ENCODE measurements at regions of chr2 and their contacts with region 1.

Region 1: DNA sequence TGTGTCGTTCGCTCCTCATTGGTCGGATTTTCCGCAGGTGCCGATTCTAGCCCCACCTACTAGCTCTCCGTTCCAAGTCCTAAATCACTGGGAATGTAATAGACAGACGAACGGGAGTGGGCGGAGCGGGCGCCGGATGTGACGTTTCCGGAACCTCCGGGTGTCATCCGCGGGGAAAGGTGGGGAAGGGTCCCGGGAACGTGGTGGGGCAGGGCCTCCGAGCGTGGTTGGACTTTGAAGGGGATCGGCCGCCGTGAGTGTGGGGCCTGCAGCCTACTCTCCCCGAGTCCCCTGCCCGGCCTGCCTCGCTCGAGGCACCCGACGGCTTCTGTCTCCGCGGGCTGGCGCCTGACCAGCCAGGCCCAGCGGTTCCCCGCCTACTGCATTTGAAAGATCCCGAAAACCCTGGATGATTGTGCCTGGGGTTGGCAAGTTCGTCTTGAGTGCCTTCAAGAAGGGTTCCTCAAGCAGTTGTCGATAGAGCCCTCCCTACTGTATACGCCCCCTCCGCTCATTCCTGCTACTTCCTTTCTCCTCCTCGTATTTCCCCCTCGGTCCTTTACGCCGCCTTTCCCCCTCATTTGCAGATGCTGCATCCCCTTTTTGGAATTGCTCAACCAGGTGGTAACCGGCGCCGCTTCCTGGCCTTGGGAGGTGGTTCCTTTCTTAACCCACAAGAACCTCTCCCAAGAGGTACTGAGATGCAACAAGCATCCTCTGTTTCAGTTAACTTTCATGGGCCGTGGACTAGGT is at the start of gene STAMBP:
- DNase-seq: peak; percentile 96 to 97
- ATAC-seq: peak; percentile 96 to 97
- H3K4me3 ChIP-seq: peak within 1 kb of the TSS; percentile 81
- H3K27ac ChIP-seq: peak within 1 kb of the TSS; percentile 88 to 95
- H3K4me1 ChIP-seq: peaks cover 23% of the 10 kb centered on the region; the same call in 2 of the 3 replicates
- CTCF ChIP-seq: no peak
- EP300 ChIP-seq: no peak
- POLR2A ChIP-seq: peak; percentile 83
- RAD21 ChIP-seq: no peak
- polyA plus RNA-seq, gene STAMBP: 86.1 and 96.3 TPM in 2 replicates

Region 2: GRCh38 chr2:73651586-73652230 is 177.3 kb before region 1 on chr2:
- CTCF ChIA-PET with region 1: no interaction called
- POLR2A ChIA-PET with region 1: no interaction called
- DNase-seq: no peak
- ATAC-seq: peak; percentile 37 to 55; a peak in 3 of 6 replicates
- H3K4me3 ChIP-seq: no peak overlapping the region
- H3K27ac ChIP-seq: no peak overlapping the region
- H3K4me1 ChIP-seq: no peaks in the 10 kb centered on the region
- CTCF ChIP-seq: no peak
- EP300 ChIP-seq: no peak
- POLR2A ChIP-seq: no peak
- RAD21 ChIP-seq: no peak

Region 3: GRCh38 chr2:73746015-73746876 is 82.7 kb before region 1 on chr2:
- CTCF ChIA-PET with region 1: no interaction called
- POLR2A ChIA-PET with region 1: no interaction called
- DNase-seq: no peak
- ATAC-seq: peak in 1 of 2 experiments; percentile 40; a peak in 2 of 6 replicates
- H3K4me3 ChIP-seq: no peak overlapping the region
- H3K27ac ChIP-seq: no peak overlapping the region
- H3K4me1 ChIP-seq: no peaks in the 10 kb centered on the region
- CTCF ChIP-seq: no peak
- EP300 ChIP-seq: no peak
- POLR2A ChIP-seq: no peak
- RAD21 ChIP-seq: no peak

Region 4: DNA sequence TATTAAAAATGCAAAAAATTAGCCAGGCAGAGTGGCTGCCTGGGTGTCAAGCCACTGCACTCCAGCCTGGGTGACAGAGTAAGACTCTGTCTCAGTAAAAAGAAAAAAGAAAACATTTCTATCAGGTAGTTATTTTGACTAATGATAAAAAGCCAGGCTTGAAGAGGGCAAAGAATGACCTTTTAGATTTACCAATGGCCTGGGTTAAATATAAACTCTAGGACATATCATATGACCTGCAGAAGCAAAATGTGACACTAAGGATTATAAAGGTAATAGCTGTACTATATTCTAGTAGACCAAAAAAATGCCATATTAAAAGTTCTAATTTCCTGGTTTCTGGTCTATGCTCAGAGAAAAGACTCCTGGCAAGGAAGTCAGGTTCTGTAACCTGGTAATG is 16.4 kb before region 1 on chr2:
- CTCF ChIA-PET with region 1: interaction called, 21 read pairs
- POLR2A ChIA-PET with region 1: interaction called, 3 read pairs
- DNase-seq: no peak
- ATAC-seq: no peak
- H3K4me3 ChIP-seq: no peak overlapping the region
- H3K27ac ChIP-seq: no peak overlapping the region
- H3K4me1 ChIP-seq: no peaks in the 10 kb centered on the region
- CTCF ChIP-seq: no peak
- EP300 ChIP-seq: no peak
- POLR2A ChIP-seq: no peak
- RAD21 ChIP-seq: no peak

Region 5: DNA sequence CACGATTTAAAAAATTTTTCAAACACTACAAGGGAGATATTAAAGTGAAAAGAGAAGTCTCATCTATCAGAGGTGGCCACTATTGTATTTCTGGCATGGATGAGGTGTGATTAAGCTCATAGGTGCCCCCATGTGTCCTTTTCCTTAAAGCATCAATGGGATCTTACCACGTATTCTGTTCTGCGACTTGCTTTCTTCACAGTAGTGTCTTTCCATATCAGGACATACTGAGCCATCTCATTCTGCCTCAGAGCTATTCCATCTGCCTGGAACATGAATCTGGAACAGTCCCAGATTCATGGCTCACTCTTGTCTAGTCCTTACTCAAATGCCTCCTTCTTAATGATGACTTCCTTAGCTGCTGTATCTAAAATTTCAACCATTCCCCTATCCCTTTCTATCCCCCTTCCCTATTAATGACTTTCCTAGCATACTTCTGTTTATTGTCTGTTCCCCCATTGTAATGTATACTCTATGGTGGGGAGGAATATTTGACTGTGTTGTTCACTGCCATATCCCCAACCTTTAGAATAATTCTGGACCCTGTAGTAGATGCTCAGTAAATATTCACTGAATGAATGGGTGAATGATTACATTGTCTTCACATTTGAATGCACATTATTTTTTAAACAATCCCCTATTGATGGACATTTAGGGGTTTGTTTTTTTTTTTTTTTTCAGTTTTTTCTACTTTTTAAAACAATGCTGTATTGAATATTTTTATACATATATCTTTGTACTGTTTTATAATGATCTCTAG is 10.8 kb after region 1 on chr2:
- CTCF ChIA-PET with region 1: interaction called, 38 read pairs
- POLR2A ChIA-PET with region 1: interaction called, 10 read pairs
- DNase-seq: no peak
- ATAC-seq: no peak
- H3K4me3 ChIP-seq: no peak overlapping the region
- H3K27ac ChIP-seq: no peak overlapping the region
- H3K4me1 ChIP-seq: peaks cover 15% of the 10 kb centered on the region
- CTCF ChIP-seq: no peak
- EP300 ChIP-seq: no peak
- POLR2A ChIP-seq: no peak
- RAD21 ChIP-seq: peak in 1 of 2 experiments; percentile 16; a peak in 1 of 5 replicates

Region 6: GRCh38 chr2:73855526-73855925 is 26.5 kb after region 1 on chr2:
- CTCF ChIA-PET with region 1: interaction called, 10 read pairs
- POLR2A ChIA-PET with region 1: no interaction called
- DNase-seq: no peak
- ATAC-seq: no peak
- H3K4me3 ChIP-seq: no peak overlapping the region
- H3K27ac ChIP-seq: no peak overlapping the region
- H3K4me1 ChIP-seq: peaks cover 38% of the 10 kb centered on the region
- CTCF ChIP-seq: no peak
- EP300 ChIP-seq: no peak
- POLR2A ChIP-seq: no peak
- RAD21 ChIP-seq: no peak

Region 7: DNA sequence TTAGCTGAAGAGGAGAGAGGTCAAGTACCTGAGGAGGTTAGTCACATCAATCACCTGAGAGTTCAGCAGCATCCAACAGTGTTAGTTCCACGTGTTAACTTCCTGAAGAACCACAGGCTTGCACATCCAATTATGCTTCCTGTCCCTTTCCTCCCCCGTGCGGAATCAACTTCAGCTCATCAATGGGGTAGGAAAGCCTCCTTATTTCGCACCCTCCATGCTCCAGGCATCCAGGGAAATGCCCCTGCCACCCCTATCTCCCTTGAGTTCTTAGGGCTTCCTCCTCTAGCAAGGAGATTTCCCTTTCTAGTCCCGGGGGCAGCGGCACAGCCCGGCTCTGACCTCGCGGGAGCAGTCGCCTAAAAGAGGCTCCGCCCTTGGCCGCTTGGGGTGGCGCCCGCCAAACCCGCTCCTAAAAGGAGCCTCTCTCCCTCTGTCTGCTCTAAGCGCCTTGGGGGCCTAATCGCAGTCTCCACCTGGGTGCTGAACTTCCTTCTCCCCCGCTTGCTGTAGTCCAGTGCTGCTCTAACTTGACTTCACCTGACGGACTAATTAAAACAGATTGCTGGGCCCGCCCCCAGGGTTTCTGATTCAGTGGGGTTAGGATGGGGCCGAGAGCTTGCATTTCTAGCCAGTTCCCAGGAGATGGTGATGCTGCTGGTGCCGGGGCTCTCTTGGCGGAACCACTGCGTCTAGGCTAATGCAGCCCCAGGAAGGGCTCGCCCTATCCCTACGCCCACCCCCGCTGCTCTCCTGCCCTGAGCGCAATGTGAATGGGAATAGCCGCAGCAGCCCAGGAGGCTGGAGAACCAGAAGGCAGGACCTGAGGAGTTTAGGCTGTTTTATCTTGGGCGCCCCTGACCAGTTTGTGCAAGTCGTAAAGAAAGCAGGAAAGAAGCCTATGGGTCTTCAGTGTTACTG is 152.3 kb after region 1 on chr2:
- CTCF ChIA-PET with region 1: no interaction called
- POLR2A ChIA-PET with region 1: no interaction called
- DNase-seq: peak; percentile 58 to 81
- ATAC-seq: peak; percentile 70 to 87
- H3K4me3 ChIP-seq: peak overlapping the region; percentile 50
- H3K27ac ChIP-seq: peak overlapping the region; percentile 72 to 85
- H3K4me1 ChIP-seq: peaks cover 50% of the 10 kb centered on the region
- CTCF ChIP-seq: no peak
- EP300 ChIP-seq: no peak
- POLR2A ChIP-seq: peak; percentile 70
- RAD21 ChIP-seq: no peak

Region 8: DNA sequence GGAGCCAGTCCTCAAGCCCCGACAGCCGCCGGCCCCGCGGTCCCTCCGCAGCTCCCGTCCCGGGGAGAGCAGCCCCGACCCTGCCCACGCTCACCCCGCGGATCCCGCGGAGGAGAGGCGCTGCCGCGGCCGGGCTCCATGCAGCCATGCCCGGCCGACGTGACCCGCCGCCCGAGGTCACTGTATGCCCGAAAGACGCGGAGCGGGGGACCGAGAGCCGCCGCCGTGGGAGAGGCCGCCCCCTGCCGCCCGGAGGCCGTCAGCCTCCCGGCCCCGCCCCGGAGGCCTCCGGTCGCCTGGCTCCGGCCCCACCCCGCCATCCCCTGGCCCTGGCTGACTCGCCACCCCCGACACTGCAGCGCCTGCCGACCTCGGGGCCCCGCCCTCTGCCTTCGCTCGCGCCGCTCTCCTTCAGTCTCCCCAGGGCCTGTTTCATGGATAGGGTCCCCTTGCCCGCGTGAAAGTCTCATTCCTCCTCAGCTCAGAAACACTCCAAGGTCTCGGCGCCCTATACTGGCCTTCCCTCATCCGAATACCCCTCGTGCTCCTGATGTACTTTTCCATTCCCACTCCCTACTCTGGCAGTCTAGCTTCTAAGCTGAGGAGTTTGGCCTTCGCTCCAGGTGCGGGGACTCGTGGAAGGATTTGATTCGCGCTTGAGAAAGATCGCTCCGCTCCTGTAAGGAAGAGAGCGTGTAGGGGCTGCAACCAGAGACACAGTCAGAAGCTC is 318.9 kb after region 1 on chr2 and contains the start of gene BOLA3:
- CTCF ChIA-PET with region 1: interaction called, 85 read pairs
- POLR2A ChIA-PET with region 1: interaction called, 12 read pairs
- DNase-seq: peak; percentile 82 to 95
- ATAC-seq: peak; percentile 94 to 96
- H3K4me3 ChIP-seq: peak within 1 kb of the TSS; percentile 82
- H3K27ac ChIP-seq: peak within 1 kb of the TSS; percentile 88 to 94
- H3K4me1 ChIP-seq: peaks cover 15% of the 10 kb centered on the region
- CTCF ChIP-seq: peak; percentile 89
- EP300 ChIP-seq: no peak
- POLR2A ChIP-seq: peak; percentile 96
- RAD21 ChIP-seq: peak; percentile 34 to 64; a peak in 4 of 5 replicates
- polyA plus RNA-seq, gene BOLA3: 93.9 and 136 TPM in 2 replicates

Region 9: DNA sequence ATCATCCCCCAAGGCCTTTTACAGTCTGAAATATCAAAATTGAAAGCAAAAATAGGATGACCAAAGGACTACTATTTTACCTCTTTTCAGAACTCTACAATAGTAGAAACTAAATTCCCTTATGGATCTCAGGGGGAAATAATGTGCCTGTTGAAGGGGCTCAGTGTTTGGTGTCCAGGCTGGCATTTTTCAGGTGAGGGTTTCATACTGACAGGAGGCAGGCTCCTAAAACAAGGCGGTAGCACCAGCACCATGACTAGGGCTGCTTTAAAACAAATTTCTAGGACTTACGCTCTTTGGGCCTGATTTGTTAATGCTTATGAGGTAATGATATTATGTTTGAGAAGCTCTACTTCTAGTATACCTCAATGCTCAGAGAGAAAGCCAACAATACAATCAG is 324.0 kb after region 1 on chr2:
- CTCF ChIA-PET with region 1: interaction called, 85 read pairs
- POLR2A ChIA-PET with region 1: interaction called, 12 read pairs
- DNase-seq: no peak
- ATAC-seq: no peak
- H3K4me3 ChIP-seq: no peak overlapping the region
- H3K27ac ChIP-seq: no peak overlapping the region
- H3K4me1 ChIP-seq: peaks cover 6% of the 10 kb centered on the region; the same call in 2 of the 3 replicates
- CTCF ChIP-seq: no peak
- EP300 ChIP-seq: no peak
- POLR2A ChIP-seq: no peak
- RAD21 ChIP-seq: no peak

Region 10: DNA sequence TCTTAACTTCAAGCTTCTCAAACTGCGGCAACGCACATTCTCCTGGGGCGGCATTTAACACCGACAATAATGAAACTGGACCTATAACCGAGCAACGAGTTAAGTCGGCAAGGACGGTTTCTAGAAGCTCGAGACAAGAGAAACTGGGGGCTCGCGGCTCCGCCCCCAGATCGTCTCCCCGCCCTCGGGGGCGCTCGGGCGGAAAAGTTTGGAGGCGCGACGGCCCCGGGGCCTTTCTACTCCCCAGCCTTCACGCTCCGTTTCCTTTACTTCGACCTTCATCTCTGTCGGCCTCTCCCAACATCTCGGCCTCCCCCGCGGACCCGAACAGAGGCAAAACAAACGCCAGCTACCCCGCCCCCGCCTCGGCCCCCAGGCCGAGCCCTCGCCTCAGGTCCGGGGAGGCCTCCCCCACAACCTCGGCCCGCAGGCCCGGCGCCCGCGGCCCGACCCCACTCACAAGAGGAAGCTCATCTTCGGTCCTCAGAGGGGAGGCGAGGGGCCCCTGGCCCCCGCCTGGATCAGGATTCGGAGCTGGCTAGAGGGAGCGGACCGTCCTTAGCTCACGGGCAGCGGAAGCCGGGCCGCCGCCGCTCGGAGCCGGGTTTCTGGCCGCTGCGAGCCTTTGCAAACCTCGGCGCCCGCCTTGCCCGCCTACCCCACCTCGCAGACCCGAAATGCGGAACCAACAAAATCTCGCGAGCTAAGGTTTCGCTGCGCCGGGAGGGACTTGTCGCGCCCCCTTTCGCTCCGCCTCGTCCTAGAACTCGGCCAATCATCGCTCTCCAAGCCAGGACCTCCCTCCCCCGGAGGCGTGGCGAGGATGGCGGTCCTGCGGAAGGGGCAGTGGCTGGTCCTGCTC is 349.4 kb after region 1 on chr2 and contains the start of gene MOB1A:
- CTCF ChIA-PET with region 1: interaction called, 6 read pairs
- POLR2A ChIA-PET with region 1: interaction called, 20 read pairs
- DNase-seq: peak; percentile 96 to 99
- ATAC-seq: peak; percentile 98 to 99
- H3K4me3 ChIP-seq: peak within 1 kb of the TSS; percentile 85
- H3K27ac ChIP-seq: peak within 1 kb of the TSS; percentile 92 to 95
- H3K4me1 ChIP-seq: peaks cover 12% of the 10 kb centered on the region; the same call in 2 of the 3 replicates
- CTCF ChIP-seq: no peak
- EP300 ChIP-seq: no peak
- POLR2A ChIP-seq: peak; percentile 86
- RAD21 ChIP-seq: no peak
- polyA plus RNA-seq, gene MOB1A: 108 and 118 TPM in 2 replicates